PC-9 (cell line): ENCODE measurements at regions of chr5 and their contacts with region 1.

Region 1: DNA sequence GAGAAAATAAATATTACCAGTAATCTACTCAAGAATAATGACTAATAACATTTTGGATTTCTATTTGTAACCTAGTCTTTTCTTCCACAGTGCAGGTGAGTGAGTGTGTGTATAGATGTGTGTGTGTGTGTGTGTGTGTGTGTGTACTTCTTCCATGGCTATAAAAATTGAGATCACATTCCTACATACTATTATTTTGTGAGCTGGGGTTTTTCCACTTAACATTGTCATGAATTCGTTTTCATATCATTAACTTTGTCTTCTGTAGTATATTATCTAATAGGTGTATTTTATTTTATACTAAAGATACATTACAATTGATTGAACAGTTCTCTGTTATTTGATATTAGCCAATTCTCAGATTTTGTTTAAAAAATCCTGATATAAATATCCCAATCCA is 152.4 kb upstream of the TRPC7 start:
- DNase-seq: no peak
- H3K4me3 ChIP-seq: no peak overlapping the region
- H3K27ac ChIP-seq: no peak overlapping the region
- H3K4me1 ChIP-seq: no peaks in the 10 kb centered on the region
- H3K27me3 ChIP-seq: no peaks in the 10 kb centered on the region
- CTCF ChIP-seq: no peak

Region 2: GRCh38 chr5:135729321-135729786 is 788.4 kb before region 1 on chr5:
- CTCF ChIA-PET with region 1: no interaction called
- POLR2A ChIA-PET with region 1: interaction called, 12 read pairs
- intact Hi-C with region 1: no loop called
- DNase-seq: no peak
- H3K4me3 ChIP-seq: no peak overlapping the region
- H3K27ac ChIP-seq: no peak overlapping the region
- H3K4me1 ChIP-seq: no peaks in the 10 kb centered on the region
- H3K27me3 ChIP-seq: peaks cover 45% of the 10 kb centered on the region
- CTCF ChIP-seq: peak; percentile 42